ENCODE measurements at regions of chr3 and their contacts with region 1.

Region 1: GRCh38 chr3:141368062-141368924 is at the start of gene ZBTB38:
- DNase-seq: peak; percentile 37

Region 2: GRCh38 chr3:141383555-141384129 is 15.3 kb after region 1 on chr3:
- CTCF ChIA-PET with region 1: interaction called, 7 read pairs
- POLR2A ChIA-PET with region 1: interaction called, 11 read pairs
- DNase-seq: no peak